Caco-2 (cell line): ENCODE measurements at regions of chr17 and their contacts with region 1.

Region 1: DNA sequence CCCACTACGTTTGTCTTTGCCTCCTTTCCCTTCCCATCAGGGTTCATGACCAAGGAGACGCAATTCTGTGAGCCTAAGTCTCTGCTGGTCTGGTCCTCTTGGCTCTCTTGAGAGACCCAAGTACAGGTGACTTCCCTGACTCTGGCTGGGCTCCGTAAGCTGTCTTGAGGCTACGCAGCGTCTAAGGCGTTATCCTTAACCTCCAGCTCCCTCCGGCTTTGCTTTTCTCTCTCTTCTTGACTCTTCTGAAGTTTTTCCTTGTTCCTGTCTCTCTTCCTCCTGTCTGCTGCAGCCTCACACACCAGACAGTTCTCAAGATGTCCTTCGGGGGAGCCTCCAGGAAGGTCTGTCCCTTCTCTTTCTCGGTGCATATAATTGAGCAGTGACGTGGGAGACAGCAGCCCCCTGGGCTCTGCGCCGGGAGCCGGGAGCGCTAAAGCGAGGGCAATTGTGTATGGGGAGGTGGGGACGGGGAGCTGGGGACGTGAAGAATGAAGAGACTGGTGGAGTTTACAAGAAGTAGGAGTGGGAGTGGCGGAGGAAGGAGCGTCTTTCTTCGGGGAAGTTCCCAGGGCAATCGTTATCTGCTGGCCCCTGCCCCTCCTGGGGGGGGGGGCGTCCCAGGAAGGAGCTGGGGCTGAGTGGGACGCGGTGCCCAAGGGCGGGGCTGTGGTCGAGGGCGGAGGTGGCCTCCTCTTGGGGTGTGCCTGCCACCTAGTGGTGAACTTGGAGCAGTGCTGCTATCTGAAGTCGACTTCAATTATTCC is 6.9 kb upstream of the PIRT start:
- DNase-seq: peak; percentile 61 to 67
- H3K4me3 ChIP-seq: peak overlapping the region; percentile 40
- H3K4me3 Mint-ChIP-seq: peak overlapping the region; percentile 93
- H3K27ac Mint-ChIP-seq: peak overlapping the region; percentile 75
- H3K4me1 ChIP-seq: peaks cover 3% of the 10 kb centered on the region; the same call in 1 of the 2 replicates
- H3K4me1 Mint-ChIP-seq: peaks cover 16% of the 10 kb centered on the region
- H3K27me3 ChIP-seq: no peaks in the 10 kb centered on the region
- H3K27me3 Mint-ChIP-seq: no peaks in the 10 kb centered on the region
- CTCF ChIP-seq: peak; percentile 69 to 73

Region 2: DNA sequence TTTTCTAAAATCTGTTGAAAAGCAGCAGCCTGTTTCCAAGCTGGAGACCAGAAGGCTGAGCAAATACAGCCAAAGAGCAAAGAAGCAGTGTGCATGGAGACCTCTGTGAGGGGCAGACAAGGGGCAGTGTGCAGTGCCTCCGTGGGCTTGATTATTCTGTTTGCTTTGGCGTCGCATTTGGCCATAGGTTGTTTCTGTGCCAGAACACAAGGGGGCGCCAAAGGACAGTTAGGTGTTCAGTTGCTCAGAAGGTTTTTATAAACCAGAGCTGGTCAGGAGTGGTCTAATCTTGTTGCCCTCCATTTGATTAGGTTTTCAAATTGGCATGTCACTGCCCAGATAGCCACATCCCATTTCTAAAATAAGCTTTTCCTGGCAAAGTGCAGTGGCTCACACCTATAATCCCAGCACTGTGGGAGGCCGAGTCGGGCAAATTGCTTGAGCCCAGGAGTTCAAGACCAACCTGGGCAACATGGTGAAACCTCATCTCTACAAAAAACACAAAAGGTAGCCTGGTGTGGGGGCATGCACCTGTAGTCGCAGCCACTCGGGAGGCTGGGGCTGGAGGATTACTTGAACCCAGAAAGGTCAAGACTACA is 198.3 kb before region 1 on chr17:
- CTCF ChIA-PET with region 1: interaction called, 9 read pairs
- POLR2A ChIA-PET with region 1: no interaction called
- intact Hi-C with region 1: loop called (anchors 5 kb)
- DNase-seq: peak; percentile 51 to 66
- H3K4me3 ChIP-seq: no peak overlapping the region
- H3K4me3 Mint-ChIP-seq: no peak overlapping the region
- H3K27ac Mint-ChIP-seq: no peak overlapping the region
- H3K4me1 ChIP-seq: no peaks in the 10 kb centered on the region
- H3K4me1 Mint-ChIP-seq: no peaks in the 10 kb centered on the region
- H3K27me3 ChIP-seq: no peaks in the 10 kb centered on the region
- H3K27me3 Mint-ChIP-seq: no peaks in the 10 kb centered on the region
- CTCF ChIP-seq: peak; percentile 57 to 70

Region 3: DNA sequence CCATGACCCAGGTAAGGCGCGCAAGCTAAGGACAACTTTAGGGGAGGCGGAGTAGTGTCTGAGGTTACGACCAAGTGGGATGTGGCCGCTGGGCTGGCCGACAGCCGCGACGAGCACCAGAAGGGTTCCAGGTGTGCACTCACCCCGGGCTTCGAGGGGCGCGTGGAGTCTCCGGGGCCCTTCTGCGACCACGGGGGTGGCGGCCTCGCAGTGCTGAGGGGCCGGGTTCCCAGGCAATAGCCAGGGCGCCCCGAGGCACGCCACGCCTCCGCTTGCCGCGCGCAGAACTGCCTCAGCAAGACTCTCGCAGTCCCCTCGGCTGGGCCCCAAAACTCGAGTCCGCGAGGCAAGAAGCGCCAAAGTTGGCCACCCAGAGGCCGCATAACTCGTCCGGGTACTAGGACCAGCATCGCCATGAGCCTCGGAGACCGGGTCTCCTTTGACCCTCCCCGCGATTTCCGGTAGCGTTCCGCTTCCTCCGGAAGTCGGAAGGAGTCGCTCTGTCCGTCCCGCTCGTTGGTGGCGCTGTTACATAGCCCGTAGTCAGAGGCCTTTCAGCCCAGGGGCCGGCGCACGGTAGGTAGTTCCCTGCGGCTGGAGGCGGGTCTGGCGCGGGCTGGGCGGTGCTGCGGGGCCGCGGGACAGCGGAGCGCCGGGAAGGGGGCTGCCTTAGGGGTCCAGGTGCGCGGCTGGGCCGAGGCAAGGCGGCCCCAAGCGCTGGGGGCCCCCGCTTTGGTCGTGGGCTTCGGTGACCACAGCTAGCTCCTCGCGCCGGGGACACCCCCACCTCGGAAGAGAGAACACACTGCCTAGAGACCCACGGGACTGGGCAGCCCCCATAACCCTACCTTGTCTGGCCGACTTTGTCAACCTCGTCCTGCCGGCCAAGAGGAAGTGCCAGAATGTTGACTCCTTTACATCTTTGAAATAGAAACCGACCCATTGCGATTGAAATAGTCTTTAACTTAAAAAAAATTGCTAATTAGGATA is 147.4 kb before region 1 on chr17 and contains the starts of genes ADPRM and SCO1:
- CTCF ChIA-PET with region 1: no interaction called
- POLR2A ChIA-PET with region 1: no interaction called
- intact Hi-C with region 1: loop called (anchors 1 kb)
- DNase-seq: peak; percentile 86 to 88
- H3K4me3 ChIP-seq: peak within 1 kb of the TSS; percentile 82
- H3K4me3 Mint-ChIP-seq: peak within 1 kb of the TSS; percentile 72
- H3K27ac Mint-ChIP-seq: peak within 1 kb of the TSS; percentile 42
- H3K4me1 ChIP-seq: no peaks in the 10 kb centered on the region
- H3K4me1 Mint-ChIP-seq: no peaks in the 10 kb centered on the region
- H3K27me3 ChIP-seq: no peaks in the 10 kb centered on the region
- H3K27me3 Mint-ChIP-seq: no peaks in the 10 kb centered on the region
- CTCF ChIP-seq: peak in 1 of 2 experiments; percentile 34
- total RNA-seq, gene ADPRM: 2.3 and 2.5 TPM in 2 replicates
- total RNA-seq, gene SCO1: 26.3 and 26.8 TPM in 2 replicates

Region 4: GRCh38 chr17:10737168-10737622 is 107.6 kb before region 1 on chr17:
- CTCF ChIA-PET with region 1: interaction called, 35 read pairs
- POLR2A ChIA-PET with region 1: interaction called, 4 read pairs
- intact Hi-C with region 1: loop called (anchors 1 kb)
- DNase-seq: peak; percentile 41 to 50
- H3K4me3 ChIP-seq: no peak overlapping the region
- H3K4me3 Mint-ChIP-seq: no peak overlapping the region
- H3K27ac Mint-ChIP-seq: no peak overlapping the region
- H3K4me1 ChIP-seq: 0 out of 2 replicates have a peak, but pooled peaks cover 5% of the 10 kb centered on the region
- H3K4me1 Mint-ChIP-seq: peaks cover 6% of the 10 kb centered on the region
- H3K27me3 ChIP-seq: no peaks in the 10 kb centered on the region
- H3K27me3 Mint-ChIP-seq: no peaks in the 10 kb centered on the region
- CTCF ChIP-seq: peak; percentile 45 to 55

Region 5: DNA sequence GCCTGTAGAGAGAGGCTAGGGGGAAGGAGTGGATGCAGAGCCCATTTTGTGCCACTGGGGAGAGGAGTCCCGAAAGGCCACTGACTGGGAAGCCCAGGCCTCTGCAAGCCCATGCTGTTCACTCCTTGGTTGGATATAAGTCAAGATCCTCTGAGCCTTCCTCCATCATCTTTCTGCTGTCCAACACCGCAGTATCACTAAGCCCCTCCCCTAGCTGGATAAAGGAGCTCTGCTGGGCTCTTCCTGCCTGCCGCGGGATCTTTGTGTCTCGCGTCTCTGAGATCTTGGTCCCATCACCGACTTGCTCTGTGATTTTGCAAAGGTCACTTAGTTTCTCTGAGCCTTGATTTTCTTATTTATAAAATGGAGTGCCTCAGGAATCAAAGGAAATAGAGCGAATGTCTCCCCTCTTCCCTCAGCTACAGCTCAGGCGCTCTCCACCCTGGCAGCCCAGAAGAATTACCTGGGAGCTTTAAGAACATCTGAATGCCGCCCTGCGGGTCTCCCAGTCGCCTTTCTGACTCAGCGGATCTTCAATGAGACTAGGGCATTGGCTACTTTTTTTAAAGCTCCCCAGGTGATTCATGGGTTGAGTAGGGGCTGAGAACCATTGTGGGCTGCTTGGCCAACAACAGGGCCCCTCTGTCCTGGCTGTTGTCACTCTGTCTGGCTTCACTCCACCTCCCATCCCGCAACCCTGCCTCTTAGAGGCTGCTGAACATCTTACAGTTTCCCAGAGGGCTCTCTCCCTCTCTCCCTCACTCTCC is 89.8 kb before region 1 on chr17:
- CTCF ChIA-PET with region 1: interaction called, 6 read pairs
- POLR2A ChIA-PET with region 1: interaction called, 4 read pairs
- intact Hi-C with region 1: loop called (anchors 5 kb)
- DNase-seq: no peak
- H3K4me3 ChIP-seq: no peak overlapping the region
- H3K4me3 Mint-ChIP-seq: no peak overlapping the region
- H3K27ac Mint-ChIP-seq: no peak overlapping the region
- H3K4me1 ChIP-seq: 0 out of 2 replicates have a peak, but pooled peaks cover 6% of the 10 kb centered on the region
- H3K4me1 Mint-ChIP-seq: peaks cover 8% of the 10 kb centered on the region
- H3K27me3 ChIP-seq: no peaks in the 10 kb centered on the region
- H3K27me3 Mint-ChIP-seq: no peaks in the 10 kb centered on the region
- CTCF ChIP-seq: no peak

Region 6: DNA sequence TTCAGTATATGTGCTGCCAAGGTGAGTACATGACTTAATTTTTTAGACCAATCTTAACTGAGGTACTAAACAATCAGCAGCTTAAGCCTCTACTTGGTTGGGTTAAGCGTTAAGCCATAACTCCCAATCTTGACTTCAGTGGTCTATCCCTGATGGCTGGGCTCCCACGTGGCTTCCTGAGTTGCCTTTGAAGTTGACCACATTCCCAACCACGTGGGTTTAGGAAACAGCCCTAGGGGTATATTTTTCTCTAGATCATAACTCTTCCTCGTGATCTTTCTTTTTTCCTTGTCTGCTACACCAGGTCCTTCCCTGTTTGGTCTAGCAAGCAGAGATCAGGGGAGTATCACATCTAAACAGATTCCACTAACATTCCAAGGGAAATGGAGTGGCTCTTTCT is 13.2 kb after region 1 on chr17:
- CTCF ChIA-PET with region 1: no interaction called
- POLR2A ChIA-PET with region 1: interaction called, 10 read pairs
- intact Hi-C with region 1: no loop called
- DNase-seq: no peak
- H3K4me3 ChIP-seq: no peak overlapping the region
- H3K4me3 Mint-ChIP-seq: no peak overlapping the region
- H3K27ac Mint-ChIP-seq: no peak overlapping the region
- H3K4me1 ChIP-seq: no peaks in the 10 kb centered on the region
- H3K4me1 Mint-ChIP-seq: no peaks in the 10 kb centered on the region
- H3K27me3 ChIP-seq: no peaks in the 10 kb centered on the region
- H3K27me3 Mint-ChIP-seq: no peaks in the 10 kb centered on the region
- CTCF ChIP-seq: no peak